Activated B cell treated with CpG ODN at 0.5 μM for 24 hours (primary cell): ENCODE measurements at regions of chr17 and their contacts with region 1.

Region 1: DNA sequence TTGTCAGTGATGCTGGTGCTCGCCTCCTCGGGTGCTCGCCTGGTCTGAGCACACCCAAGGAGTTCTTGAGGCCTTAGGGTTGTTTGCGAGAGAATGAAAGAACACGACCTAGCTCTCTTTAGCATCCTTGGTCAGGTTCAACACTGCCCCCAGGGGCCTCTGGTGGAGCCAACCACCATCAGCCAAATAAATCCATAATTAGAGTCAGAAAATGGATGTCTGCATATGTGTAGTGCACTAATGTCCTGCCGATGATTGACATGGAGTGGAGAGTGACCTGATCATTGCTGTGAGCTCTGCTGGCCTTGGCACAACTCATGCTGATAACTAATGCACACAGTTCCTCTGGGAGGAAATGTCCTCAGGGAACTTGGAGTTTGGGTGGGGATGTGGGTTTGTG is 8.2 kb upstream of the STH start:
- DNase-seq: no peak
- ATAC-seq: no peak
- H3K4me3 Mint-ChIP-seq: no peak overlapping the region
- H3K27ac Mint-ChIP-seq: no peak overlapping the region
- H3K4me1 Mint-ChIP-seq: no peaks in the 10 kb centered on the region
- H3K27me3 Mint-ChIP-seq: peaks cover 1% of the 10 kb centered on the region
- CTCF ChIP-seq: no peak

Region 2: GRCh38 chr17:46082257-46082656 is 91.4 kb after region 1 on chr17:
- CTCF ChIA-PET with region 1: no interaction called
- POLR2A ChIA-PET with region 1: interaction called, 14 read pairs
- intact Hi-C with region 1: no loop called
- DNase-seq: no peak
- ATAC-seq: no peak
- H3K4me3 Mint-ChIP-seq: no peak overlapping the region
- H3K27ac Mint-ChIP-seq: peak overlapping the region; percentile 50
- H3K4me1 Mint-ChIP-seq: peaks cover 20% of the 10 kb centered on the region
- H3K27me3 Mint-ChIP-seq: no peaks in the 10 kb centered on the region
- CTCF ChIP-seq: no peak